PC-3 (cell line): ENCODE measurements at regions of chr9 and their contacts with region 1.

Region 1: DNA sequence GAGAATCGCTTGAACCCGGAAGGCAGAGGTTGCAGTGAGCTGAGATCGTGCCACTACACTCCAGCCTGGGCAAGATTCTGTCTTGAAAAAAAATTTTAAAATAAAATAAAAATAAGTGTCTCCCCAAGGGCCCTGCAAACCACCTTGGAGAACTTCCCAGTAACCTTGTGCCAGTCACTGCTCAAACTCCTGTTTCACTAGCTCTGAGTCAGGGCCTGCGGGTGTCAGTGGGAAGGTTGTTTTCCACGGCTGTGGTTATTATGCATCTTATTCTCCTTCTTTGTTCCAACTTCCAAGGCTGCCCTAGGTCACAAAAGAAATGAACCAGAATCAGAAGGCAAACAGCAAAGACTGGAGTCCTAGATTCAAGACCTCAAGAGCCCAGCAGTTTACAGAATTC is 246.7 kb downstream of the ADAMTSL1 start:
- DNase-seq: peak; percentile 19
- ATAC-seq: peak; percentile 60; the same call in 1 of the 2 replicates
- H3K4me3 ChIP-seq: no peak overlapping the region
- H3K27ac ChIP-seq: no peak overlapping the region
- H3K4me1 ChIP-seq: no peaks in the 10 kb centered on the region
- H3K27me3 ChIP-seq: no peaks in the 10 kb centered on the region
- CTCF ChIP-seq: no peak

Region 2: GRCh38 chr9:18106006-18106560 is 614.6 kb before region 1 on chr9:
- CTCF ChIA-PET with region 1: no interaction called
- POLR2A ChIA-PET with region 1: no interaction called
- intact Hi-C with region 1: no loop called
- DNase-seq: no peak
- ATAC-seq: no peak
- H3K4me3 ChIP-seq: no peak overlapping the region
- H3K27ac ChIP-seq: no peak overlapping the region
- H3K4me1 ChIP-seq: no peaks in the 10 kb centered on the region
- H3K27me3 ChIP-seq: peaks cover 5% of the 10 kb centered on the region
- CTCF ChIP-seq: no peak

Region 3: GRCh38 chr9:18800579-18800978 is 79.9 kb after region 1 on chr9:
- CTCF ChIA-PET with region 1: no interaction called
- POLR2A ChIA-PET with region 1: interaction called, 13 read pairs
- intact Hi-C with region 1: no loop called
- DNase-seq: no peak
- ATAC-seq: no peak
- H3K4me3 ChIP-seq: no peak overlapping the region
- H3K27ac ChIP-seq: no peak overlapping the region
- H3K4me1 ChIP-seq: no peaks in the 10 kb centered on the region
- H3K27me3 ChIP-seq: no peaks in the 10 kb centered on the region
- CTCF ChIP-seq: no peak